Astrocyte of the cerebellum (primary cell): ENCODE measurements at regions of chr17 and their contacts with region 1.

Region 1: GRCh38 chr17:49388290-49388640 is 26.2 kb upstream of the ZNF652 start:
- DNase-seq: no peak
- H3K4me3 ChIP-seq: no peak overlapping the region
- CTCF ChIP-seq: no peak

Region 2: DNA sequence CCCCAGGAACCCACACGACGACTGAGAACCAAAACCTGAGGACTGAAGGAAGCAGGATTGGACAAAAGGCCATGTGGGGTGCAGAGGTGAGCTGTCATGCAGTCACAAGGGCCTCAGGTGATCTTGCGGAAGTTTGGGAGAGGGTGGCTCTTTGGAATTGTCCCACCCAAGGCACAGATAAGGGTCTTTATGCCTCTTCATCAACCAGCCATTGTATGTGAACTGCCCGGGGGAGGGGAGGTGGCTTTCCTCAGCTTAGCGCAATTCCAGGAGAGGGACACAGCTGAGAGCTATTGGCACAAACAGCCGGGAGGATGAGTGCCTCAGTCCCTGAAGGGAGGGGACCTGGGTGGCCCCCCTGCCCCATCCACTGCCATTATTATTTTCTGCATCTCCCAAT is 102.5 kb before region 1 on chr17:
- in situ Hi-C with region 1: loop called (anchors 5 kb)
- DNase-seq: no peak
- H3K4me3 ChIP-seq: no peak overlapping the region
- CTCF ChIP-seq: no peak

Region 3: GRCh38 chr17:49343273-49343672 is 45.0 kb before region 1 on chr17:
- in situ Hi-C with region 1: loop called (anchors 5 kb)
- DNase-seq: no peak
- H3K4me3 ChIP-seq: no peak overlapping the region
- CTCF ChIP-seq: no peak

Region 4: DNA sequence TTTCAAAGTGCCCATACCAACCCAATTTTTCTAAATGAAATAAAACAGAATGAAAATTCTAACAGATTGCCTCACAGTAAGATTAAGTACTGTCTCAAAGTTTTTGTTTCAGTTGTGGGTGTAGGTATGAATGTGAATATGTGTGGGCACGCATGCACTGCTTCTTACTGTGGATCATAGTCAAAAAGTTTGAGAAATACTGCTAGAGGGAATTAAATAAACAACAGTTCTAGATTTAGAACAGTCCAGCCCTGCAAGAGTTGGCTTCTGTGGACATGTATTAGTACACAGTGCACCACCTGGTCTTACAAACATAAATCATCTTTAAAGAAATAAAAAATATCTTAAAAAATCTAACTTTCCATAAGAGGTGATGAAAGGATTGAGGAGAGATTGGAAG is 34.7 kb before region 1 on chr17:
- in situ Hi-C with region 1: no loop called
- DNase-seq: no peak
- H3K4me3 ChIP-seq: no peak overlapping the region
- CTCF ChIP-seq: no peak